ENCODE measurements at regions of chr3 and their contacts with region 1.

Region 1: DNA sequence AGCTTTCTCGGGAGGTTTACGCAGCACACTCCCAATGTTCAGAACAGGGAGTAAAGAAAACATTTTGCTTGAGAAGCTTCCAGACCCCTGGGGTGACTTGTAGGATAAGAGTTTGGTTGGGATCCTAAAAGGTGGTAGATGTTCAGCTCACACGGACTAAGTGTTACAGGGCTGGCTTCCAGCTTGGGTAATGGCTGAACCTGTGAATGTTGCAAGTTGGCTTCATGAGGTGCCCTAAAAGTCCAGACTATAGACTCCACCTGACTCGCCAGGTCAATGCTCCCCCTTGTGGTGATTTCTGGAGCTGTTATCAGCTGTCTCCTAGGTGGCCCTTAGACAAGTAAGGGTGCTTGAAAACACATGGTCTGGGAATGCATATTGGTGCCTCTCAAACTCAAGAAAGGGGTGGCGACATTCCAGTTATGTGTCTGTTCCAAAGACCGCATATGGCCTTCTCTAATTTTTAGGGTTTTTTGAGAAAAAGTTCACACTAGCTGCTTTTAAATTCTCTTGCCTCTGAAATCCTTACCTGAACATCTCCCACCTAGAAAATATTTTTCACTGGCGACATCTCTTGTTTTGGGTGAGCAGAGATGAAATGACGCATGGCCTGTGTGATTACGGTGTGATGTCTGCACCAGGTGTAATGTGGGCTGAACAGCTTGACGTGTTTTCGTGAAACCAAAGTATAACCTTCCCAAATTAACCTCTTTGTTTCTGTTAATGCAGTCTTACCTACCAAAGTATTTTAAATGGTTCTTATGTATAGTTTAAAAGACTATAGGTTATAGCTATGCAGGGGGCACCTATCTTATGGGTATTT is 175.7 kb upstream of the KBTBD8 start:
- H3K4me3 ChIP-seq: no peak overlapping the region
- H3K27ac ChIP-seq: no peak overlapping the region
- H3K4me1 ChIP-seq: no peaks in the 10 kb centered on the region
- CTCF ChIP-seq: no peak

Region 2: GRCh38 chr3:66253790-66254620 is 568.4 kb before region 1 on chr3:
- CTCF ChIA-PET with region 1: interaction called, 28 read pairs
- POLR2A ChIA-PET with region 1: no interaction called
- H3K4me3 ChIP-seq: no peak overlapping the region
- H3K27ac ChIP-seq: no peak overlapping the region
- H3K4me1 ChIP-seq: no peaks in the 10 kb centered on the region
- CTCF ChIP-seq: peak; percentile 31; the same call in 1 of the 2 replicates

Region 3: DNA sequence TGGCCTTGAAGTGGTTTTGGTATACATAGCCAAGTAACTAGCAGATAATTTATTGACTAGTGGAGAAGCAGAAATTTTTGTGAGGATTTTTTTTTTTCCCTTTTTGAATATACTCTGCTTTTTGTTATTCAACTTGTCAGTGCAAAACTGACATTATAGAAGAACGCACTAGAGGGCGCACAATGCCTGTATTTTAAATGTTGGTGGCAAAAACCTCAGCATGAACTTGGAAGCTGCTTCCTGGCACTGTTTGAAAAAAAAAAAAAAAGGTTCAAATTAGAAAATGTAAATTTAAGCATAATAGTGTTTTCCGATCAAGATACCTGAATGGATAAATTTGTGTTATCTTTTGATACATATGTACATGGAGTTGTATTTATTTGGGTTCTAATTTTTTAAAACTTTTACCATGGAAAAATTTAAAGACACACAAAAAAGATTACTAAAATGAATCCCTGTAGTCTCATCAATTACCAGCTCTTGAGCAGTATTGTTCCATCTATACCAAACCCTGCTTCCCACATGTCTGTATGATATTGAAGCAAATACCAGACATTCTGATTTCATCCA is 545.6 kb before region 1 on chr3:
- CTCF ChIA-PET with region 1: interaction called, 13 read pairs
- POLR2A ChIA-PET with region 1: no interaction called
- H3K4me3 ChIP-seq: no peak overlapping the region
- H3K27ac ChIP-seq: no peak overlapping the region
- H3K4me1 ChIP-seq: no peaks in the 10 kb centered on the region
- CTCF ChIP-seq: no peak

Region 4: DNA sequence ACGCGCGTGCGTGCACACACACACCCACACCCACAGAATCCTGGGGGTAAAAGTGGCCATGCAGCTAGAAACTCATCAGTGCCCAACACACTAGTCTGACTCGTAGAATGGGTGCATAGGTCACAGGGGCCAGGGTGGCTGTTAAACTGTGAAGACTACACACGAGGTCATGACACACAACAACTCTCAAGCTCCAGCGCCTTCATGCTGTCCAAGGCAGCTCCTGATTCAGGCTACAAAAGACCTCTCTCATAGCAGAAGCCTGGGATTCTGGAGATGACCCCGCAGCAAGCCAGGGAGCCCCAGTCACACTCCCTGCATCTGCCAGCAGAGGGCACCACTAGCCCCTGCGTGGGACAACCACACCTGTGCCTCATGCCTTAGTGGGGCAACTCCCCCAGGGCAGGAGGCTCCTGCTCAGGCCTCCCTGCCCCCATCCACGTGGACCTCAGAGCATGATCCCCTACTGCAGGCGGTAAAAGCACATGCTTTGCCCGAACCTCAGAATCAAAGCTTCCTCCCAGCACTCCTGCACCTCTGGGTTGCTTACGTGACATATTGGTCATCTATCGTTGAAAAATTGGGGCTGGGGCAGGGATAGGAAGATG is 414.7 kb before region 1 on chr3:
- CTCF ChIA-PET with region 1: interaction called, 18 read pairs
- POLR2A ChIA-PET with region 1: no interaction called
- H3K4me3 ChIP-seq: no peak overlapping the region
- H3K27ac ChIP-seq: no peak overlapping the region
- H3K4me1 ChIP-seq: no peaks in the 10 kb centered on the region
- CTCF ChIP-seq: peak; percentile 51

Region 5: DNA sequence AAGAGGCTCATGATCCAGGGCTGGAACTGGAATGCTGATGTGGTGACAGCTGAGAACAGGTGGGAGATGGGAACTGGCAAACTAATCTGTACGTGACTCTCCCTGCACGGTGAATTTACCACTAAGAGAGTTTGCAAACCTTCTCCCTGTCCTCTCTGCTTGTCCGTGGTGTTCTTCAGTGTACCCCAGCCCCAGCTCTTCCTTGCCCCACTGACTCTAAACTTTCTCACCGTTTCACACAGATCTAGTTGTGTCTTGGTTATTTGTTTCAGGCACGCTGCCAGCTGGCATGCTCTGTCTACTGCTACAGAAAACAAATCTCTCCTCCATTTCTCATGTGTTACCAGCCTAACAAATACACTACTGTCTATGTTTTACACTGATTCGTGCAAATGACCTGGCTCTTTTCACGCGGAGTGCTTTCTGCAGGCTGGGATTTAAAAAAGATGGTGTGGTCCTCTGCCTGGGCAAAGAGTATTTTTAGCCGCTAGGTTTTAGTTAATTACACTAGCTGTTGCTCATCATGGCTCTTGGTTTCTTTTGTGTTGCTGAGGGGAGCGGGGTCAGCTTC is 128.9 kb before region 1 on chr3:
- CTCF ChIA-PET with region 1: no interaction called
- POLR2A ChIA-PET with region 1: no interaction called
- H3K4me3 ChIP-seq: no peak overlapping the region
- H3K27ac ChIP-seq: no peak overlapping the region
- H3K4me1 ChIP-seq: no peaks in the 10 kb centered on the region
- CTCF ChIP-seq: no peak

Region 6: GRCh38 chr3:66756468-66757036 is 65.8 kb before region 1 on chr3:
- CTCF ChIA-PET with region 1: no interaction called
- POLR2A ChIA-PET with region 1: no interaction called
- H3K4me3 ChIP-seq: no peak overlapping the region
- H3K27ac ChIP-seq: no peak overlapping the region
- H3K4me1 ChIP-seq: no peaks in the 10 kb centered on the region
- CTCF ChIP-seq: no peak

Region 7: DNA sequence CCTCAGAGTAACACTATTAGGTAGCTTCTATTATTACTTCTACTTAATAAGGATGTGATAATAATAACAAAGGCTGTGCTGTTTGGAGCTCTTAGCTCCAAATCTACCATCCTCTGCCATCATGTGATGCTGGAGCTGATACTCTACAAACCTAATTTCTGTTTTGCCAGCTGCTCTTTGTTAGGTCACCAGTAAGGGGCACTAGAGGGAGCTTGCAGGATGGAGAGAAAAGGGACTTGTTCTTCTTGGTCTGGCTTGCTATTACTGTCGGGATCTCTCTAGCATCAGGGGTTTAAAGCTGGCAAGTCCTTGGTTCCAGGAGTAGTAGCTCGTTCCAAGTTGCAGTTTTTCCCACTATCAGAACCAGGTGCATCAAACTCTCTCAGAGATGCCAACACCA is 19.2 kb before region 1 on chr3:
- CTCF ChIA-PET with region 1: interaction called, 25 read pairs
- POLR2A ChIA-PET with region 1: no interaction called
- H3K4me3 ChIP-seq: no peak overlapping the region
- H3K27ac ChIP-seq: no peak overlapping the region
- H3K4me1 ChIP-seq: no peaks in the 10 kb centered on the region
- CTCF ChIP-seq: no peak

Region 8: GRCh38 chr3:66809595-66809958 is 12.8 kb before region 1 on chr3:
- CTCF ChIA-PET with region 1: interaction called, 25 read pairs
- POLR2A ChIA-PET with region 1: no interaction called
- H3K4me3 ChIP-seq: no peak overlapping the region
- H3K27ac ChIP-seq: no peak overlapping the region
- H3K4me1 ChIP-seq: no peaks in the 10 kb centered on the region
- CTCF ChIP-seq: no peak

Region 9: GRCh38 chr3:67090474-67090873 is 268.1 kb after region 1 on chr3:
- CTCF ChIA-PET with region 1: no interaction called
- POLR2A ChIA-PET with region 1: no interaction called
- H3K4me3 ChIP-seq: no peak overlapping the region
- H3K27ac ChIP-seq: no peak overlapping the region
- H3K4me1 ChIP-seq: no peaks in the 10 kb centered on the region
- CTCF ChIP-seq: no peak